Naive thymus-derived CD8-positive, alpha-beta T cell (primary cell): ENCODE measurements at regions of chr17 and their contacts with region 1.

Region 1: DNA sequence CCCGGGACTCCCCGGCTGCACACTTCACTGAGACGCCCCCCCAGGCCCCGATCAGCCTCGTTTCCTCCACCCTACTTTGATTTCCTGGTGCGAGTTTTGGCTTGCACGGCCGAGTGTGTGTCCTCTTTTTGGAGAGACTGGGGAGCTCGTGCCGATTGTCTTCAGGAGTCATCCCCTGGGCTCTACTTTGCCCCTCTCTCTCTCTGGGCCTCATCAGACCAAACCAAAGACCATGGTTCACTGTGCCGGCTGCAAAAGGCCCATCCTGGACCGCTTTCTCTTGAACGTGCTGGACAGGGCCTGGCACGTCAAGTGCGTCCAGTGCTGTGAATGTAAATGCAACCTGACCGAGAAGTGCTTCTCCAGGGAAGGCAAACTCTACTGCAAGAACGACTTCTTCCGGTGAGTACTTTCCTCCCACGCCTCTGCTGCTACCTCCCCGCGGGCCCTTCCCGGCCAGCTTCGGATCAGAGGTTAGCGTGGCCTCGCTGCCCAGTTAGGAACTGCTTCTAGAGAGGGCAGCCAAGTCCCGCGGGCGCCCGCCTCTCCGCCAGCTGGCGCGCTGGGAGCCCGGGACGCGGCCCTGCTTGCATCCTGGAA is 791 bp downstream of the LHX1 start:
- DNase-seq: peak in 2 of 10 donors; percentile 30 to 35
- ATAC-seq: peak; percentile 14 to 31
- H3K4me3 Mint-ChIP-seq: peak overlapping the region; percentile 65 to 87 (median 83)
- H3K27ac Mint-ChIP-seq: peak overlapping the region in 3 of 10 donors; percentile 37 to 84 (median 43)
- H3K4me1 Mint-ChIP-seq: peaks cover 28 to 85% (median 66%) of the 10 kb centered on the region in 4 donors
- H3K27me3 Mint-ChIP-seq: peaks cover 44 to 85% (median 60%) of the 10 kb centered on the region in 5 donors

Region 2: DNA sequence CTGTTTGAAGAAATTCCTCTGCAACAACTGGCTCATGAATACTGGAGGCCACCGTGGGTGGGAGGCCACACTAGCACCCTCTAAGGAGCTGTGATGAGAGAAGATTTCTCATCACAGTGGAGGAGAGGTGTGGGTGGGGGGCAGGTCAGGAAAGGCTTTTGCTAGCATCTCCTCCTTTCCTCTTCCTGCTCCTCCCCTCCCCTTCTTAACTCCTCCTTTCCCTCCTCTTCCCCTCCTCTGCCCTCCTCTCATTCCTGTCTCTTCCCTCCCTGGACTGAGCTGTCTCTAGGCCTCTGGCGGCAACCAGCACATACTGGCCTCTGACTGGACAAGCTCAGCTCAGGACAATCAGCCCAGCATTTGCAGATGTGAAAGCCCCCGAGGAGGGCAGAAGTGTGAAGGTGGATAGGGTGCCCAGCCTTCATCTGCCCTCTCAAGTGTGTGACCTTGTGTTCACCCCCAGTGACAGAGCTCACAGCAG is 19.8 kb before region 1 on chr17:
- POLR2A ChIA-PET with region 1: no interaction called
- DNase-seq: no peak
- ATAC-seq: no peak
- H3K4me3 Mint-ChIP-seq: no peak overlapping the region
- H3K27ac Mint-ChIP-seq: no peak overlapping the region
- H3K4me1 Mint-ChIP-seq: no peaks in the 10 kb centered on the region
- H3K27me3 Mint-ChIP-seq: peaks cover 9 to 53% (median 31%) of the 10 kb centered on the region in 5 donors

Region 3: DNA sequence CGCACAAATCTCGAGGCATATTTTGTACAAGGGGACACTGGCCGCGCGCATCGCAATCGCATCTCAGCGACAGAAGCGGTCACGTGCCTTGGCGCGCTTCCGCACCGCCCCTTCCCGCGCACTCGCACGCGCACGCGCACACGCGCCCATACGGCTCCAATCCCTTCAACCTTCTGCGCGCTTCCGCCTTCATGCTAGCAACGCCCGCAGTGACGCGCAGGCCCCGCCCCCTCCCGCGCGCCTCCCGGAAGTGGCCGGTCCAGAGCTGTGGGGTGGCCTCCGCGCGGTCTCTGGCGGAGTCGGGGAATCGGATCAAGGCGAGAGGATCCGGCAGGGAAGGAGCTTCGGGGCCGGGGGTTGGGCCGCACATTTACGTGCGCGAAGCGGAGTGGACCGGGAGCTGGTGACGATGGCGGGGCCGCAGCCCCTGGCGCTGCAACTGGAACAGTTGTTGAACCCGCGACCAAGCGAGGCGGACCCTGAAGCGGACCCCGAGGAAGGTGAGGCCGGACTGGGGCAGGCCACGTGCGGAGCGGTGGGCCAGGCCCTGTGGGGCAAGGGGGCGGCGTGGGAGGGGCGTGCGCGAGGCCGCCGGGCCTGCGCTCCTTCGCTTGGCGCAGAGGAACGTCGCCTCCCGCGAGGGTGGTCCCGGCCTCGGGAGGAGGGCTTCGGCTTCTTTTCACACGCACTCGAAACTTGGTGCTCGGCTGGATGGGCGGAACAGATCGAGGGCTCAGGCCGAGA is 10.8 kb after region 1 on chr17 and contains the start of gene AATF:
- POLR2A ChIA-PET with region 1: interaction called, 22 read pairs
- DNase-seq: peak; percentile 92 to 97 (median 96)
- ATAC-seq: peak; percentile 89 to 92
- H3K4me3 Mint-ChIP-seq: peak within 1 kb of the TSS; percentile 88 to 99 (median 94)
- H3K27ac Mint-ChIP-seq: peak within 1 kb of the TSS; percentile 88 to 97 (median 96)
- H3K4me1 Mint-ChIP-seq: peaks cover 34 to 64% (median 57%) of the 10 kb centered on the region in 4 donors
- H3K27me3 Mint-ChIP-seq: peaks cover 14 to 37% (median 30%) of the 10 kb centered on the region in 5 donors
- polyA plus RNA-seq, gene AATF: 64.2 to 89.7 (median 69.9) TPM